ENCODE measurements at regions of chr10 and their contacts with region 1.

Region 1: GRCh38 chr10:22003079-22003913 is at the start of gene DNAJC1:
- DNase-seq: peak; percentile 96 to 99 (median 98)
- ATAC-seq: peak; percentile 91
- H3K4me3 ChIP-seq: peak within 1 kb of the TSS; percentile 91
- H3K4me3 Mint-ChIP-seq: peak within 1 kb of the TSS; percentile 95
- H3K27ac ChIP-seq: peak within 1 kb of the TSS; percentile 75 to 79
- H3K27ac Mint-ChIP-seq: peak within 1 kb of the TSS; percentile 84
- H3K4me1 ChIP-seq: peaks cover 12% of the 10 kb centered on the region
- H3K4me1 Mint-ChIP-seq: peaks cover 28% of the 10 kb centered on the region
- H3K27me3 ChIP-seq: no peaks in the 10 kb centered on the region
- H3K27me3 Mint-ChIP-seq: no peaks in the 10 kb centered on the region
- CTCF ChIP-seq: no peak
- total RNA-seq, gene DNAJC1: 16.8 to 19.3 TPM

Region 2: GRCh38 chr10:21953585-21954057 is 49.7 kb before region 1 on chr10:
- CTCF ChIA-PET with region 1: no interaction called
- POLR2A ChIA-PET with region 1: no interaction called
- intact Hi-C with region 1: no loop called
- DNase-seq: peak in 3 of 14 experiments; percentile 40 to 58 (median 54)
- ATAC-seq: peak; percentile 70
- H3K4me3 ChIP-seq: no peak overlapping the region
- H3K4me3 Mint-ChIP-seq: no peak overlapping the region
- H3K27ac ChIP-seq: no peak overlapping the region
- H3K27ac Mint-ChIP-seq: no peak overlapping the region
- H3K4me1 ChIP-seq: no peaks in the 10 kb centered on the region
- H3K4me1 Mint-ChIP-seq: no peaks in the 10 kb centered on the region
- H3K27me3 ChIP-seq: no peaks in the 10 kb centered on the region
- H3K27me3 Mint-ChIP-seq: no peaks in the 10 kb centered on the region
- CTCF ChIP-seq: peak; percentile 67

Region 3: DNA sequence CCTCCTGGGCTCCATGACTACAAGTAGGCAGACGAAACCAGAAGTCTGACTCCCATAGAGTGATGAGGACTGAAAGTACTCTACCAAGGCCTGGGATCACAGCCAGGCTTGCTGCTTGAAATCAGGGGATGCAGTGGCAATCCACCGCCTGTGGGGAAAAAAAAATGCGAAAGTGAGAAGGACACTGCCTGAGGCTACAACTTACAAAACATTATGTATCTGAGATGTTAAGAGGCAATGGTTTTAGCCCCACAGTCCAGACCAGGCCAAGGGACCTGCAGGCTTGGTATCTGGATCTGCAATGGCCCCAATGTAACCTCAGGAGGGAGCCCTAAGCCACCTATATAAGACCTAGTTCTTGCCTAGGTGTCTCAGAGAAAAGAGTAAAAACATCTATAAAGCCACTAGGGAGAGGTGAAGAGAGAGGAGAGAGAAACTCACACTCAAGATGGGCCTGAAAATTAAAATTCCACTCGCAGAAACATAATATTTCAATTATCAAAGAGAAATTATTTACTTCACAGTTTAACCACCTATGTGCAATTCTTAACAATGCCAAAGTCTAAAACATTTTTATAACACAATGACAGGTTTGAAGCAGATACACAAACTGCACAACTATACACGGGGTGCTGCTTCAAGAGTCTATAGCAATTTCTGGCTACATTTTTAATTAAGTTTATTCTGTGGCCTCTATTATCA is 13.7 kb before region 1 on chr10:
- CTCF ChIA-PET with region 1: interaction called, 13 read pairs
- POLR2A ChIA-PET with region 1: interaction called, 15 read pairs
- intact Hi-C with region 1: no loop called
- DNase-seq: peak in 9 of 14 experiments; percentile 3 to 67 (median 19)
- ATAC-seq: peak; percentile 87
- H3K4me3 ChIP-seq: no peak overlapping the region
- H3K4me3 Mint-ChIP-seq: no peak overlapping the region
- H3K27ac ChIP-seq: no peak overlapping the region
- H3K27ac Mint-ChIP-seq: no peak overlapping the region
- H3K4me1 ChIP-seq: peaks cover 3% of the 10 kb centered on the region
- H3K4me1 Mint-ChIP-seq: peaks cover 10% of the 10 kb centered on the region
- H3K27me3 ChIP-seq: no peaks in the 10 kb centered on the region
- H3K27me3 Mint-ChIP-seq: no peaks in the 10 kb centered on the region
- CTCF ChIP-seq: peak; percentile 57

Region 4: GRCh38 chr10:22022257-22023032 is 19.1 kb after region 1 on chr10:
- CTCF ChIA-PET with region 1: no interaction called
- POLR2A ChIA-PET with region 1: interaction called, 3 read pairs
- intact Hi-C with region 1: loop called in 1 of 2 experiments (anchors 2 kb)
- DNase-seq: peak; percentile 36 to 82 (median 56)
- ATAC-seq: peak; percentile 95
- H3K4me3 ChIP-seq: peak overlapping the region; percentile 40
- H3K4me3 Mint-ChIP-seq: peak overlapping the region; percentile 69
- H3K27ac ChIP-seq: peak overlapping the region in 1 of 2 donors; percentile 25
- H3K27ac Mint-ChIP-seq: peak overlapping the region; percentile 86
- H3K4me1 ChIP-seq: peaks cover 16% of the 10 kb centered on the region
- H3K4me1 Mint-ChIP-seq: peaks cover 25% of the 10 kb centered on the region
- H3K27me3 ChIP-seq: no peaks in the 10 kb centered on the region
- H3K27me3 Mint-ChIP-seq: no peaks in the 10 kb centered on the region
- CTCF ChIP-seq: no peak

Region 5: GRCh38 chr10:22228943-22229801 is 225.9 kb after region 1 on chr10:
- CTCF ChIA-PET with region 1: no interaction called
- POLR2A ChIA-PET with region 1: interaction called, 23 read pairs
- intact Hi-C with region 1: loop called (anchors 10 kb)
- DNase-seq: peak; percentile 72 to 93 (median 82)
- ATAC-seq: peak; percentile 77
- H3K4me3 ChIP-seq: peak overlapping the region; percentile 62
- H3K4me3 Mint-ChIP-seq: peak overlapping the region; percentile 92
- H3K27ac ChIP-seq: peak overlapping the region; percentile 25 to 53
- H3K27ac Mint-ChIP-seq: peak overlapping the region; percentile 99
- H3K4me1 ChIP-seq: peaks cover 3% of the 10 kb centered on the region
- H3K4me1 Mint-ChIP-seq: peaks cover 19% of the 10 kb centered on the region
- H3K27me3 ChIP-seq: no peaks in the 10 kb centered on the region
- H3K27me3 Mint-ChIP-seq: peaks cover 11% of the 10 kb centered on the region
- CTCF ChIP-seq: no peak

Region 6: DNA sequence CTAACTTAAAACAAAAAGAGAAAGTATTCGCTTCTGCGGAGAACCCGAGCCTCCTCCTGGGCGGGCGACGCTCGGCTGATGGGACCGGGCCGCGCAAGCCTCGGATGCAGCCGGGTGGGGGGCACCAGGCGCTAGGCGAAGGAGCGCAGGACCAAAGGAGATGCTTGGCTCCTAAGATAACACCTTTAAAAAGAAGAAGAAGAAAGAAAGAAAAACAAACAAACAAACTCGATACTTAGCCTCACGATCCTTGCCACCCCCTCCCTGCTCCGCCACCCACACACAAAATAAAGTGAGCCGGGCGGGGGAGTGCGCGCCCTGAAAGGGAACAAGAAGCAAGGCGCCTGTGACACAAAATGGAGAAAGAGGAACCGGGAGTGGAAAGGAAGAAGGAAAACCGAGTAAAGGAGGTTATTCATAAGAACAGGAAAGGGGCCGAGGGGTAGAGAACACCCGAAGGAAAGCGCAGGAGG is 248.5 kb after region 1 on chr10:
- CTCF ChIA-PET with region 1: interaction called, 3 read pairs
- POLR2A ChIA-PET with region 1: interaction called, 13 read pairs
- intact Hi-C with region 1: loop called (anchors 5 kb)
- DNase-seq: peak; percentile 46 to 82 (median 66)
- ATAC-seq: peak; percentile 57
- H3K4me3 ChIP-seq: peak overlapping the region; percentile 76
- H3K4me3 Mint-ChIP-seq: peak overlapping the region; percentile 96
- H3K27ac ChIP-seq: peak overlapping the region; percentile 71 to 76
- H3K27ac Mint-ChIP-seq: peak overlapping the region; percentile 97
- H3K4me1 ChIP-seq: peaks cover 10% of the 10 kb centered on the region
- H3K4me1 Mint-ChIP-seq: peaks cover 56% of the 10 kb centered on the region
- H3K27me3 ChIP-seq: peaks cover 0 to 7% of the 10 kb centered on the region in 2 experiments
- H3K27me3 Mint-ChIP-seq: peaks cover 22% of the 10 kb centered on the region
- CTCF ChIP-seq: no peak

Region 7: GRCh38 chr10:23095404-23095965 is 1092.2 kb after region 1 on chr10 and contains the start of gene MSRB2:
- CTCF ChIA-PET with region 1: no interaction called
- POLR2A ChIA-PET with region 1: no interaction called
- intact Hi-C with region 1: loop called in 1 of 2 experiments (anchors 5 kb)
- DNase-seq: peak; percentile 49 to 93 (median 70)
- ATAC-seq: peak; percentile 45
- H3K4me3 ChIP-seq: peak within 1 kb of the TSS; percentile 70
- H3K4me3 Mint-ChIP-seq: peak within 1 kb of the TSS; percentile 94
- H3K27ac ChIP-seq: peak within 1 kb of the TSS; percentile 48 to 50
- H3K27ac Mint-ChIP-seq: peak within 1 kb of the TSS; percentile 86
- H3K4me1 ChIP-seq: peaks cover 19% of the 10 kb centered on the region
- H3K4me1 Mint-ChIP-seq: peaks cover 41% of the 10 kb centered on the region
- H3K27me3 ChIP-seq: no peaks in the 10 kb centered on the region
- H3K27me3 Mint-ChIP-seq: no peaks in the 10 kb centered on the region
- CTCF ChIP-seq: no peak
- total RNA-seq, gene MSRB2: 0.66 to 1.4 TPM